ENCODE measurements at regions of chr1 and their contacts with region 1.

Region 1: GRCh38 chr1:22052115-22053016 is at the start of gene CDC42:
- DNase-seq: peak; percentile 98
- H3K4me3 Mint-ChIP-seq: peak within 1 kb of the TSS; percentile 95
- H3K27ac Mint-ChIP-seq: peak within 1 kb of the TSS; percentile 98
- H3K4me1 Mint-ChIP-seq: peaks cover 63% of the 10 kb centered on the region
- H3K27me3 Mint-ChIP-seq: no peaks in the 10 kb centered on the region
- total RNA-seq, gene CDC42: 318 to 322 TPM

Region 2: DNA sequence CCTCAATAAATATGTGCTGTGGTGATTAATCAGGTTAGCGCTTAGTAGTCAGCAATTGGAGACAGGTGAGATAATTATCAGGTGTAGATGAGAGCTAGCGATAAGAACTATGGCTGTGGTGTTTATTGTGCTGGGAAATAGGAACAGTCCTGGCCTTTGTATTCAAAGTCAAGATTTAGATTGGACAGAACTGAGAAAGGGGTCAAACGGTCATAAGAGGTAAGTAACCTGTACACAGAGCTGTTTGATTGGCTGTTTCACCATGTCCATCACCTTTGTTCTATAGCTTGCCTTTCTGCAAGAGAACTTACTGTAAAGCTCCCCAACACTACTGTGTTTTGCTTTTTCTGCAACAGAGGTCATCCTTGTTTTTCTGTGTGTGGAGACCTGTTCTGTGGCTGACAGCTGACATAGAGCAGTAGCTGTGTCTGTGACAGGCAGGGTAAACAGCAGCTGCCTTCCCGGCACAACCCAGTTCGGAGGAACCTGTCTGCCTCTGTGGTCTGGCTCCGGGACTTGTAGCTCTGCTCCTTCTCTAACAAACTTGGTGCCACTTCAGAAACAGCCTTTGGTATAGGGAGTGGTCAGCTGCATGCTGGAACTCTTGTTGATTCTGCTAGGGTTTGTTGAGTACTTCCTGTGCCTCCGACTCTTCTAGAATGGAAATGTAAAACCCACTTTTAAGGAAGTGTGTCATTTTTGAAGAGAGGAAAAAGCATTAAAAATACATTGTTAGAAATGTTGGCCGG is 21.0 kb before region 1 on chr1:
- CTCF ChIA-PET with region 1: interaction called, 5 read pairs
- intact Hi-C with region 1: loop called (anchors 1 kb)
- DNase-seq: peak; percentile 74
- H3K4me3 Mint-ChIP-seq: peak overlapping the region; percentile 56
- H3K27ac Mint-ChIP-seq: peak overlapping the region; percentile 84
- H3K4me1 Mint-ChIP-seq: peaks cover 59% of the 10 kb centered on the region
- H3K27me3 Mint-ChIP-seq: no peaks in the 10 kb centered on the region

Region 3: DNA sequence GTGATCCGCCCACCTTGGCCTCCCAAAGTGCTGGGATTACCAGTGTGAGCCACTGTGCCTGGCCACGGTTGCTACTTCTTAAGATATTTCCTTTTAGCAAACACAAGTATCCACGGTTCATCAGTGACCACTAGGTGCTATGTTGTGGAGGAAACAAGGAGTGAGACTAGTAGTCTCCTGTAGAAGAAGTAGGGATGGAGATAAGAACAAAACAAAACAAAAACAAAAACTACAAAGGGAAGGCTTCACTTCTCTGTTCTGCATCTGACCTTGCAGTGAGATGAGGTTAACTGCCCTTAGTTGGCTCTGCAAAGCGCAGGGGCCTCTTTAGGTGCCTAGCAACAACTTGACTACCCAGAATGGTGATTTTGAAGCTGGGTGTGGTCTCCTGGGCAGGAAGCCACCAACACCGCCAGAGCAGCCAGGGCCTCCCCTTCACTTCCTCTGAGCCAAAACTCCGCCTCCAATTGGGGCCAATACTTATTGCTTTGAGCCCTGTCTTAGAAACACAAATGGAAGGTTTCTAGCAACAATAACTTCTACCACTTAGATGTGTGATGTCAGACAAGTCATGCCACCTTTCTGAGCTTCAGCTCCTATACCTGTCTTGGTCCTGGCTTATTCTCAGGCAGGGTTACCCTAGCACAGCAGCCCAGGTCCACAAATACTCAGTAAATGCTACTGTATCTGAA is 12.6 kb before region 1 on chr1:
- CTCF ChIA-PET with region 1: interaction called, 8 read pairs
- intact Hi-C with region 1: loop called (anchors 1 kb)
- DNase-seq: peak; percentile 96
- H3K4me3 Mint-ChIP-seq: peak overlapping the region; percentile 69
- H3K27ac Mint-ChIP-seq: peak overlapping the region; percentile 97
- H3K4me1 Mint-ChIP-seq: peaks cover 52% of the 10 kb centered on the region
- H3K27me3 Mint-ChIP-seq: no peaks in the 10 kb centered on the region

Region 4: GRCh38 chr1:22077728-22078127 is 25.4 kb after region 1 on chr1:
- CTCF ChIA-PET with region 1: no interaction called
- intact Hi-C with region 1: loop called (anchors 2 kb)
- DNase-seq: no peak
- H3K4me3 Mint-ChIP-seq: no peak overlapping the region
- H3K27ac Mint-ChIP-seq: peak overlapping the region; percentile 42
- H3K4me1 Mint-ChIP-seq: peaks cover 85% of the 10 kb centered on the region
- H3K27me3 Mint-ChIP-seq: no peaks in the 10 kb centered on the region

Region 5: GRCh38 chr1:22275721-22276395 is 223.5 kb after region 1 on chr1:
- CTCF ChIA-PET with region 1: no interaction called
- intact Hi-C with region 1: no loop called
- DNase-seq: peak; percentile 62
- H3K4me3 Mint-ChIP-seq: no peak overlapping the region
- H3K27ac Mint-ChIP-seq: no peak overlapping the region
- H3K4me1 Mint-ChIP-seq: no peaks in the 10 kb centered on the region
- H3K27me3 Mint-ChIP-seq: peaks cover 7% of the 10 kb centered on the region

Region 6: GRCh38 chr1:22704440-22705067 is 652.2 kb after region 1 on chr1:
- CTCF ChIA-PET with region 1: no interaction called
- intact Hi-C with region 1: no loop called
- DNase-seq: peak; percentile 91
- H3K4me3 Mint-ChIP-seq: no peak overlapping the region
- H3K27ac Mint-ChIP-seq: no peak overlapping the region
- H3K4me1 Mint-ChIP-seq: no peaks in the 10 kb centered on the region
- H3K27me3 Mint-ChIP-seq: peaks cover 20% of the 10 kb centered on the region

Measured in activated naive CD4-positive, alpha-beta T cell treated with anti-CD3 and anti-CD28 coated beads for 36 hours (primary cell).